Gastrocnemius medialis (tissue), 4 donors: ENCODE measurements at regions of chr1 and their contacts with region 1.

Region 1: DNA sequence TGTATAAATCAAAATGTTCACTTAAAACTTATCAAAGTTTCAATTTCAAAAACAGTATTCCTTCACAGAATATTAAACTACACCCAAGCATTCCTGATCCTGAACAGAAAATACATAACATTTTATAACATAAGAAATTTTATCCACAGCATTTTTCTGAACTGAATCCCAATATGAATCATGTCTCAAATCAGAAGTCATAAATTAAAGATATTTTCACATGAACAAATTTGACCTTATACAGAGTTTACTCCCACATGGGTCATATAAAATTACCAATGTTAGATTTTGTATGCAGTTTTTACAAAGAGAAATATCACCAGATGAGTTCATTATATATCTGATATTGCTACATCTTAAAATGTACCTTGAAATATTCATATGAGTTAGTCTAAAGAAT is 48.6 kb upstream of the ASPM start:
- DNase-seq: no peak
- ATAC-seq: no peak
- H3K4me3 ChIP-seq: no peak overlapping the region
- H3K27ac ChIP-seq: no peak overlapping the region
- H3K4me1 ChIP-seq: peaks cover 42 to 48% of the 10 kb centered on the region in 2 donors
- H3K27me3 ChIP-seq: no peaks in the 10 kb centered on the region
- CTCF ChIP-seq: no peak
- POLR2A ChIP-seq: no peak

Region 2: DNA sequence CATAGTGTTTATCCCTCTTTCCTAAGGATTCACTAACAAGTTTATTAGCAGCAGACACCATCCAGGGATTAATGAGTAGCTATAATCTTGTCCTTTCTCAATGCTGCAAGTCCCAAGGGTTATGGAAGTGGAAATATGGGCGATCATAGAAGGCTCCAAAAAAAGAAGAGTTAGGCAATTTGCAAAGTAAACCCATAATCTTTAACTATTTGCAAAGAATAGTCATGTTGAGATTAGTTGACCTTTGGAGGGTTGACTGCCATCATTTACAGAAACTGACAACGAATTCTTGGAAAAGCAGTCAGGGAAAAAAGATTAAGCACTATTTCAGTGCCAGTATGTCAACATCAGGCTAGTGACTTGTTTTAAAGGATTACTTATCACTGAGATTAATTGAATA is 756.8 kb before region 1 on chr1:
- in situ Hi-C with region 1: no loop called
- intact Hi-C with region 1: no loop called
- DNase-seq: no peak
- ATAC-seq: no peak
- H3K4me3 ChIP-seq: no peak overlapping the region
- H3K27ac ChIP-seq: no peak overlapping the region
- H3K4me1 ChIP-seq: no peaks in the 10 kb centered on the region
- H3K27me3 ChIP-seq: no peaks in the 10 kb centered on the region
- CTCF ChIP-seq: no peak
- POLR2A ChIP-seq: no peak

Region 3: GRCh38 chr1:197146197-197146889 is 48.8 kb before region 1 on chr1 and contains the start of gene ASPM:
- in situ Hi-C with region 1: no loop called
- intact Hi-C with region 1: loop called (anchors 5 kb)
- DNase-seq: peak; percentile 88 to 92
- ATAC-seq: peak; percentile 99
- H3K4me3 ChIP-seq: peak within 1 kb of the TSS; percentile 69 to 78 (median 74)
- H3K27ac ChIP-seq: no peak within 1 kb of the TSS
- H3K4me1 ChIP-seq: peaks cover 0 to 6% of the 10 kb centered on the region in 2 donors
- H3K27me3 ChIP-seq: peaks cover 0 to 11% (median 3%) of the 10 kb centered on the region in 3 donors
- CTCF ChIP-seq: no peak
- POLR2A ChIP-seq: no peak
- total RNA-seq, gene ASPM: 0.05 to 0.52 (median 0.26) TPM